ENCODE measurements at regions of chr17 and their contacts with region 1.

Region 1: GRCh38 chr17:47895856-47896671 is at the start of gene SP2:
- DNase-seq: peak; percentile 100
- H3K4me3 ChIP-seq: peak within 1 kb of the TSS; percentile 60
- H3K4me3 Mint-ChIP-seq: peak within 1 kb of the TSS; percentile 75
- H3K27ac Mint-ChIP-seq: peak within 1 kb of the TSS; percentile 91
- H3K4me1 ChIP-seq: peaks cover 10% of the 10 kb centered on the region
- H3K4me1 Mint-ChIP-seq: peaks cover 23% of the 10 kb centered on the region
- H3K27me3 ChIP-seq: no peaks in the 10 kb centered on the region
- H3K27me3 Mint-ChIP-seq: peaks cover 2% of the 10 kb centered on the region
- CTCF ChIP-seq: peak; percentile 22 to 39
- total RNA-seq, gene SP2: 24.8 and 25.2 TPM in 2 replicates

Region 2: DNA sequence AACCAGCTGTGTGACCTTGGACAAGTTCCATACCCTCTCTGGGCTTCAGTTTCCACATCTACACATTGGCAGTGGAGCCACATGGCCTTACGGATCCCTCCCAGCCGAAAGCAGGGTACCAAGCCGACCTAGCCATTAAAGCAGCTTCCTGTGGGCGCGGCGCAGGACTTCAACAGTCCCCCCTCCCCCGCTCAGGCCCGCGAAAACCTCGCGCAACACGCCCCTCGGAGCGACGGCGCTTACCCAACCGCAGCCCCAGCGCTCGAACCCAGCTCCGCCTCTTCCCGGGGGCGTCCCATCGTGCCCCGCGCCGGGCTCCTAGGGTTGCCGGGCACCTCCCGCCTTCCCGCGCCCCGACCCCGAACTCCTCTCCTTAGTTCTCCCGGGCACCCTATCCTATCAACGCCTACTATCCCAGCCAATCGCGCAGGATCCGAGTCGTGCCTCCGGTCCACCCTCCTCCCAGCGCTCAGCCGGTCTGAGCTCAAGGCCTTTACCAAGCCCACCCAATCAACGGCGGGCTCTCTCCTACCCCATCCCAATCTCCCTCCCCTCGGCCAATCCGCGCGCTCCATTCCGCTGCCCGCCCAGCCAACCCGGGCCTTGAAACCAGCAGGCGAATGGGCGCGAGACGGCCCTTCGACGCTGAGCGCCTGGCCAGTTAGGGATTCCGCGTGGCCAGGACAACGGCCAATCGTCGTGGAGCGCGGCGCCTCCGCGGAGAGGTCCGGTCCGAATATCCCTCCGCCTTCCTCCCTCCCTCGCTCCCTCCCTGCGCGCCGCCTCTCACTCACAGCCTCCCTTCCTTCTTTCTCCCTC is 246.7 kb before region 1 on chr17 and contains the start of gene KPNB1:
- CTCF ChIA-PET with region 1: no interaction called
- POLR2A ChIA-PET with region 1: interaction called, 11 read pairs
- intact Hi-C with region 1: no loop called
- DNase-seq: peak; percentile 100
- H3K4me3 ChIP-seq: peak within 1 kb of the TSS; percentile 92
- H3K4me3 Mint-ChIP-seq: peak within 1 kb of the TSS; percentile 87
- H3K27ac Mint-ChIP-seq: peak within 1 kb of the TSS; percentile 83
- H3K4me1 ChIP-seq: peaks cover 29% of the 10 kb centered on the region
- H3K4me1 Mint-ChIP-seq: peaks cover 27% of the 10 kb centered on the region
- H3K27me3 ChIP-seq: no peaks in the 10 kb centered on the region
- H3K27me3 Mint-ChIP-seq: no peaks in the 10 kb centered on the region
- CTCF ChIP-seq: peak in 1 of 2 experiments; percentile 2
- total RNA-seq, gene KPNB1: 967 and 1,072 TPM in 2 replicates

Region 3: DNA sequence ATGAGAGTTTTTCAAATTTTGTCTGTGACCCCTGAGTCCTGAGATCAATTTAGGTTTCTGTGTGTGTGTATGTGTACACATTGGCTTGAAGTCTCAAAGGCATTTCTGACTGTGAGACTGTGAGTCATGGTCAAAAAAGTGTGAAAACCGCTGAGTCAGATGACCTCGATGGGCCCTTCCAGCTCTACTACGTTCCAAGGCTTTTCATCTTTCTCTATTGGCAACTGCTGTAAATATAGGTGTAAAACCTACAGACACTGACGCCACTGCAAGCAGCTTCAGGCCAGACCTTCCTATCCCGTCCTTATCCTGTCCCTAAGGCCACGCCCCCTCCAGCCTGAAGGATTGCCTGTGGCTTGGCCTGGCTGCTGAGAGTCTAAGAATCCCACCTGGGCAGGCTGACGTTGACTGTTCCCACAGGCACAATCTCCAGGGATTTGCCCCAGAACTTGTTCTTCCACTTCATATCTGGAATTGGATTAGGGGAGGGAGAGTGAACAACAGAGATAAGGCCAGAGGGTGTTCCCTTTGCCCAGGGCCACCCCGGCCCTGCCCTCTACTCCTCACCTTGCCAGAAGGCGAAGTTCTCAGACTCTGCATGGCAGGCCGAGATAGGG is 85.8 kb before region 1 on chr17:
- CTCF ChIA-PET with region 1: interaction called, 4 read pairs
- POLR2A ChIA-PET with region 1: no interaction called
- intact Hi-C with region 1: loop called (anchors 1 kb)
- DNase-seq: peak; percentile 100
- H3K4me3 ChIP-seq: no peak overlapping the region
- H3K4me3 Mint-ChIP-seq: peak overlapping the region; percentile 56
- H3K27ac Mint-ChIP-seq: peak overlapping the region; percentile 93
- H3K4me1 ChIP-seq: peaks cover 36% of the 10 kb centered on the region
- H3K4me1 Mint-ChIP-seq: peaks cover 36% of the 10 kb centered on the region
- H3K27me3 ChIP-seq: no peaks in the 10 kb centered on the region
- H3K27me3 Mint-ChIP-seq: no peaks in the 10 kb centered on the region
- CTCF ChIP-seq: no peak

Region 4: DNA sequence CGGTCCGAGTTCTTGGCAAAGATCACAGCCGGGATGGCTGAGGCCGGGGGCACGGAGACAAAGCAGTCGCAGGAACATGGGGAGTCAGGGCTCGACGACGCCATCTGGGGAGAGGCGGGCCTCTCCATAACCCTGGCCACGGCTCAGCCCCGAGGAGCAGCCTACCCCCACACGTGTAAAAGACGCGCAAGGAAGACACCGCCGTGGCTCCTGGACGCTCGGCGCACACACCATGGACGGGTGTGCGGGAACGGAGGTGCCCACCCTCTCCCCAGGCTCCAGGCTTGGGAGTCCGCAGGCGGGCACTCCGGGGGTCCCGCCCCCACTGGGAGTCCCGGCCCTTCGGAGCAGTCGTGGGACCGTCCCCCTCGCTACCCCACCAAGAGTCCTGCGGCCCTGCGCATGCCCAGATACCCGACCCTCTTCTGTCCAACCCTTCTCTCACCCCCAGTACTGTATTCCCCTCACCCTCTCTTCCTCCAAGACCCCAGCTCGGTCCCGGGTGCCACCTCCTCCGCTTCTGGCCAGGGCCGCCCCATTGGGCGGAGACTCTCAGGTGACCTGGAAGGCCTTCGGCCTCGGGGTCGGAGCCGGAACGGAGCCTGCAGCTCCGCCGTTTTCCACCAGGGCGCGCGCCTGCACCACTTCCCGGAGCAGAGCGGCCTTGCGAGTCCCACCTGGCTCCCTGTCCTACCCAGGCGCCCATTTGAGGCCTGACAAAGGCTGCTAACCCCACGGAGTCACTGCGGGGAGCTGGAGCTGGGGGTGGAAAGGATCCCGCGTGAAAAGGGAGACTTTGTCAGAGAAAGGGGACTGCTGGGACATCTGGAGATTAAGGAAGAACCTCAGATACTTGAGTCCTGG is 55.1 kb before region 1 on chr17 and contains the start of gene SCRN2:
- CTCF ChIA-PET with region 1: interaction called, 904 read pairs
- POLR2A ChIA-PET with region 1: interaction called, 25 read pairs
- intact Hi-C with region 1: loop called (anchors 1 kb)
- DNase-seq: peak; percentile 98 to 100
- H3K4me3 ChIP-seq: peak within 1 kb of the TSS; percentile 63
- H3K4me3 Mint-ChIP-seq: peak within 1 kb of the TSS; percentile 80
- H3K27ac Mint-ChIP-seq: peak within 1 kb of the TSS; percentile 76
- H3K4me1 ChIP-seq: peaks cover 47% of the 10 kb centered on the region
- H3K4me1 Mint-ChIP-seq: peaks cover 44% of the 10 kb centered on the region
- H3K27me3 ChIP-seq: no peaks in the 10 kb centered on the region
- H3K27me3 Mint-ChIP-seq: no peaks in the 10 kb centered on the region
- CTCF ChIP-seq: peak; percentile 100
- total RNA-seq, gene SCRN2: 73.6 and 80.8 TPM in 2 replicates

Region 5: DNA sequence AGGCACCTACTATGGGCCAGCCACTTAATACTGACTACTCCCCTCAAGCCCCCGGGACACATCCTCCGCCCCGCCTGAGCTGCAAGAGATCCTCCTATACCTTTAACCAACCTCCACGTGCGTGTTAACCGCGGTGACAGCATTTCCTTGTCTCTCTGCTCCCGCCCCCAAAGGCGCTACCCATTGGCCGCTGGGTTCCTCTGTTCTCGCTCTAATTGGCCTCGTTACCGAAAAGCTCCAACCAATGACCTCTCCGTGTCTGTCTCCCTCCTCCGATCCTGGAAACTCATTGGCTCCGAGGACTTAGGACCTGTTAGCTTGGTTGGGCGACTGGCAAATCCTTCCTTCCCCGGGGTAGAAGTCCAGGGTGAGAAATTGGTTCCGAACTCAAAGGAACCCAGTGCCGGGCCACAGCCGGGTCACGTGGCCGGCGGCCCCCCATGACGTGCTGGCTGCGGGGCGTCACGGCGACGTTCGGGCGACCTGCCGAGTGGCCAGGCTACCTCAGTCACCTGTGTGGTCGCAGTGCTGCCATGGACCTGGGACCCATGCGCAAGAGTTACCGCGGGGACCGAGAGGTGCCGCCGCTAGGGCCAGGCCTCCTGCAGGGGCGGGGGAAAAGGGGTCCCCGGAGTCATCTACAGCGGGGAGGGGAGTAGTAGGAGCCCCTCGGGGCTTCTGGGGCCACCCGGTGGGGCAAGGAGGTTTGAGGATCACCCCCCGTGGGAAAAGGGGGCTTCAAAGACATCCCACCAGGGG is 45.4 kb after region 1 on chr17 and contains the start of gene PNPO:
- CTCF ChIA-PET with region 1: interaction called, 20 read pairs
- POLR2A ChIA-PET with region 1: interaction called, 56 read pairs
- intact Hi-C with region 1: loop called (anchors 1 kb)
- DNase-seq: peak; percentile 100
- H3K4me3 ChIP-seq: peak within 1 kb of the TSS; percentile 69
- H3K4me3 Mint-ChIP-seq: peak within 1 kb of the TSS; percentile 82
- H3K27ac Mint-ChIP-seq: peak within 1 kb of the TSS; percentile 75
- H3K4me1 ChIP-seq: peaks cover 12% of the 10 kb centered on the region; the same call in 1 of the 2 replicates
- H3K4me1 Mint-ChIP-seq: peaks cover 23% of the 10 kb centered on the region
- H3K27me3 ChIP-seq: no peaks in the 10 kb centered on the region
- H3K27me3 Mint-ChIP-seq: no peaks in the 10 kb centered on the region
- CTCF ChIP-seq: peak; percentile 45 to 48
- total RNA-seq, gene PNPO: 110 and 118 TPM in 2 replicates

Region 6: GRCh38 chr17:47957591-47958428 is 61.7 kb after region 1 on chr17 and contains the start of gene PRR15L:
- CTCF ChIA-PET with region 1: interaction called, 4 read pairs
- POLR2A ChIA-PET with region 1: interaction called, 10 read pairs
- intact Hi-C with region 1: no loop called
- DNase-seq: peak; percentile 89 to 93
- H3K4me3 ChIP-seq: peak within 1 kb of the TSS; percentile 59
- H3K4me3 Mint-ChIP-seq: peak within 1 kb of the TSS; percentile 67
- H3K27ac Mint-ChIP-seq: peak within 1 kb of the TSS; percentile 35
- H3K4me1 ChIP-seq: peaks cover 67% of the 10 kb centered on the region
- H3K4me1 Mint-ChIP-seq: peaks cover 53% of the 10 kb centered on the region
- H3K27me3 ChIP-seq: no peaks in the 10 kb centered on the region
- H3K27me3 Mint-ChIP-seq: no peaks in the 10 kb centered on the region
- CTCF ChIP-seq: no peak
- total RNA-seq, gene PRR15L: 24.3 and 30.5 TPM in 2 replicates

Region 7: GRCh38 chr17:48134912-48135480 is 238.9 kb after region 1 on chr17:
- CTCF ChIA-PET with region 1: no interaction called
- POLR2A ChIA-PET with region 1: no interaction called
- intact Hi-C with region 1: no loop called
- DNase-seq: no peak
- H3K4me3 ChIP-seq: no peak overlapping the region
- H3K4me3 Mint-ChIP-seq: no peak overlapping the region
- H3K27ac Mint-ChIP-seq: no peak overlapping the region
- H3K4me1 ChIP-seq: no peaks in the 10 kb centered on the region
- H3K4me1 Mint-ChIP-seq: no peaks in the 10 kb centered on the region
- H3K27me3 ChIP-seq: no peaks in the 10 kb centered on the region
- H3K27me3 Mint-ChIP-seq: peaks cover 11% of the 10 kb centered on the region
- CTCF ChIP-seq: peak; percentile 40 to 61

Measured in Caco-2 (cell line).